GM12878 (cell line): ENCODE measurements at regions of chr2 and their contacts with region 1.

Region 1: GRCh38 chr2:156589381-156590079 is 153.4 kb downstream of the GPD2 start:
- DNase-seq: no peak
- ATAC-seq: peak; percentile 89
- H3K4me3 ChIP-seq: no peak overlapping the region
- H3K27ac ChIP-seq: no peak overlapping the region
- H3K4me1 ChIP-seq: no peaks in the 10 kb centered on the region; the same call in none of the 2 replicates
- H3K27me3 ChIP-seq: no peaks in the 10 kb centered on the region
- CTCF ChIP-seq: peak; percentile 36 to 79 (median 54); a peak in 5 of 6 replicates
- EP300 ChIP-seq: no peak
- POLR2A ChIP-seq: no peak
- RAD21 ChIP-seq: peak; percentile 94

Region 2: DNA sequence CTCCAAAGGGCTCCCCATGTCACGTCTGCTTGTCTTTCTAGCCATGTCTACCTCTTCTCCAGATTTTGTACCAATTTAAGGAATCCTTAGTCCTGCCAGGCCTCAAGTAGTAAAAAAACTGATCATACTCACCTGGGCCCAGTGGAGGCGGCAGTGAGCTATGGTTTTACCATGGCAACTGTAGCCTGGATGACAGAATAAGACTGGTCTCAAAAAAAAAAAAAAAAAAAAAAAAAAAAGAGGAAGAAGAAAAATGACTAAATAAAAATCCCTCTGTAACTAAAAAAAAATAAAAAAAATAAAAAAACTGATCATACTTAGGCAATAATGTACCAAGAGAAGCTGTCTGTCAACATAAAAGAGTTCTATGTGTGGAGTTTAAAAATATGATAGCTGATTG is 478.6 kb before region 1 on chr2:
- CTCF ChIA-PET with region 1: interaction called, 11 read pairs
- POLR2A ChIA-PET with region 1: no interaction called
- RAD21 ChIA-PET with region 1: interaction called, 4 read pairs
- SMC1A ChIA-PET with region 1: interaction called, 3 read pairs
- in situ Hi-C with region 1: no loop called
- intact Hi-C with region 1: loop called (anchors 5 kb)
- DNase-seq: no peak
- ATAC-seq: peak; percentile 94
- H3K4me3 ChIP-seq: no peak overlapping the region
- H3K27ac ChIP-seq: no peak overlapping the region
- H3K4me1 ChIP-seq: no peaks in the 10 kb centered on the region
- H3K27me3 ChIP-seq: no peaks in the 10 kb centered on the region
- CTCF ChIP-seq: peak; percentile 39 to 47 (median 46)
- EP300 ChIP-seq: no peak
- POLR2A ChIP-seq: no peak
- RAD21 ChIP-seq: peak; percentile 66

Region 3: DNA sequence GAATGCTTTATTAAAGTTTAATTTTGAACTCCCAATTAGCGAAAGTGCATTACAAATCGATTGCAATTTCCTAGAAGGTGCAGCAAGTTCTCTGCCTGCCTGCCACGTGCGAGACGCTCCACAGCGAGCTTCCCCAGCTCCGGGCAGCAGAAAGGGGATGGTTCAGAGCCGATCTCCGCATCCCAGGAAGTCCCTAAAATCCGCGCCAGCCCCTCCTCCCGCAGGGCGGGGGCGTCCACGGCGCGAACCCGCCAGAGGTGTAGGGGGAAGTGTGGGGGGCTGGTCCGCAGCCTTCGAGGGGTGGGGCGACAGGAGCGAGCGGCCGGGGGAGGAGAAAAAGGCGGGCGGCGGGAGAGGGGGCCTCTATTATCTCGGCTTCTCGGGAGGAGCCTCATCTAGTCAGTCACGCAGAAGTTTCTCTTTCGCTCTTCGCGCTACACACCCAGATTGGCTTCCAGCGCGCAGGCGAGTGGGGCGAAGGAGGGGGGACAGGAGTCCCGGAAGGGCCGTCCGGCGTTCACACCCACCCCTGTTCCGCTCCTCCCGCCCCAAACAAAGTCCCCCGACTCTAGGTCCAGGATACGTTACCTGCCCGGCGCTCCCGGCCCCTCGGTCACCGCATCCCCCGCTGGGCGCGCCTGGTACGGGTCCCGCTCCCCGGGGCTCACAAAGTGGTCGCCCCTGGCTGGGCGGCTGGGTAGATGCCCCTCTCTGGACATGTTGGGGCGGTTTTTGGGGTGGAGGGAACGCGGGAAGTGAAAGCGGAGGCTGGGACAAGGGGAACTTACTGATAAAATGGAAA is 247.9 kb before region 1 on chr2:
- CTCF ChIA-PET with region 1: interaction called, 14 read pairs
- POLR2A ChIA-PET with region 1: interaction called, 3 read pairs
- RAD21 ChIA-PET with region 1: interaction called, 205 read pairs
- SMC1A ChIA-PET with region 1: interaction called, 244 read pairs
- in situ Hi-C with region 1: loop called (anchors 25 kb)
- intact Hi-C with region 1: no loop called
- DNase-seq: peak; percentile 89
- ATAC-seq: peak; percentile 86
- H3K4me3 ChIP-seq: peak overlapping the region; percentile 93
- H3K27ac ChIP-seq: peak overlapping the region; percentile 100
- H3K4me1 ChIP-seq: peaks cover 15% of the 10 kb centered on the region
- H3K27me3 ChIP-seq: no peaks in the 10 kb centered on the region
- CTCF ChIP-seq: no peak
- EP300 ChIP-seq: no peak; a peak in 1 of 4 replicates
- POLR2A ChIP-seq: peak; percentile 90
- RAD21 ChIP-seq: no peak; the same call in 1 of the 2 replicates

Region 4: GRCh38 chr2:156430236-156430979 is 159.1 kb before region 1 on chr2:
- CTCF ChIA-PET with region 1: interaction called, 13 read pairs
- POLR2A ChIA-PET with region 1: no interaction called
- RAD21 ChIA-PET with region 1: interaction called, 13 read pairs
- SMC1A ChIA-PET with region 1: interaction called, 18 read pairs
- in situ Hi-C with region 1: no loop called
- intact Hi-C with region 1: no loop called
- DNase-seq: no peak
- ATAC-seq: peak; percentile 48
- H3K4me3 ChIP-seq: no peak overlapping the region; the same call in 1 of the 2 replicates
- H3K27ac ChIP-seq: peak overlapping the region; percentile 83
- H3K4me1 ChIP-seq: peaks cover 28% of the 10 kb centered on the region
- H3K27me3 ChIP-seq: no peaks in the 10 kb centered on the region
- CTCF ChIP-seq: no peak
- EP300 ChIP-seq: no peak
- POLR2A ChIP-seq: no peak
- RAD21 ChIP-seq: no peak

Region 5: DNA sequence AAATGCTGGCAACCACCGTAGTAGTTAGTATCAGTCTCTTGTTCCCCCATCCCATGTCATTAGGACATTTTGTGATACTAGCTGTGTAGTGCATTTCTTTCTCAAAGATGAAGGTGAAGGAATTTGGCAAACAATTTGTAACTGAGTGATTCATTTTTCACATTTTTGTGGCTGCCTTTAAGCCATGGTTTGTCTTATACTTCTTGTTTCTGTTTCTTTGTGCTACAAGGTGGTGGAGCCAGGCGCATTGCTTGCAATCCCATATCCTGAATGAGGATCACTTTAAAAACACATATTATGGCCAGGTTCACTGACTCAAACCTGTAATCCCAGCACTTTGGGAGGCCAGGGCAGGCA is 112.7 kb before region 1 on chr2:
- CTCF ChIA-PET with region 1: interaction called, 4 read pairs
- POLR2A ChIA-PET with region 1: no interaction called
- RAD21 ChIA-PET with region 1: interaction called, 3 read pairs
- SMC1A ChIA-PET with region 1: interaction called, 32 read pairs
- in situ Hi-C with region 1: no loop called
- intact Hi-C with region 1: no loop called
- DNase-seq: peak; percentile 77
- ATAC-seq: peak; percentile 86
- H3K4me3 ChIP-seq: no peak overlapping the region
- H3K27ac ChIP-seq: peak overlapping the region; percentile 66
- H3K4me1 ChIP-seq: peaks cover 39% of the 10 kb centered on the region; the same call in 1 of the 2 replicates
- H3K27me3 ChIP-seq: no peaks in the 10 kb centered on the region
- CTCF ChIP-seq: no peak
- EP300 ChIP-seq: peak; percentile 24 to 52; a peak in 1 of 4 replicates
- POLR2A ChIP-seq: no peak
- RAD21 ChIP-seq: no peak

Region 6: GRCh38 chr2:156538083-156538504 is 51.4 kb before region 1 on chr2:
- CTCF ChIA-PET with region 1: interaction called, 10 read pairs
- POLR2A ChIA-PET with region 1: no interaction called
- RAD21 ChIA-PET with region 1: interaction called, 10 read pairs
- SMC1A ChIA-PET with region 1: interaction called, 9 read pairs
- in situ Hi-C with region 1: no loop called
- intact Hi-C with region 1: no loop called
- DNase-seq: peak; percentile 53
- ATAC-seq: peak; percentile 87
- H3K4me3 ChIP-seq: no peak overlapping the region
- H3K27ac ChIP-seq: peak overlapping the region; percentile 69
- H3K4me1 ChIP-seq: peaks cover 49% of the 10 kb centered on the region
- H3K27me3 ChIP-seq: no peaks in the 10 kb centered on the region
- CTCF ChIP-seq: no peak
- EP300 ChIP-seq: no peak
- POLR2A ChIP-seq: peak; percentile 49; the same call in 1 of the 2 replicates
- RAD21 ChIP-seq: no peak

Region 7: DNA sequence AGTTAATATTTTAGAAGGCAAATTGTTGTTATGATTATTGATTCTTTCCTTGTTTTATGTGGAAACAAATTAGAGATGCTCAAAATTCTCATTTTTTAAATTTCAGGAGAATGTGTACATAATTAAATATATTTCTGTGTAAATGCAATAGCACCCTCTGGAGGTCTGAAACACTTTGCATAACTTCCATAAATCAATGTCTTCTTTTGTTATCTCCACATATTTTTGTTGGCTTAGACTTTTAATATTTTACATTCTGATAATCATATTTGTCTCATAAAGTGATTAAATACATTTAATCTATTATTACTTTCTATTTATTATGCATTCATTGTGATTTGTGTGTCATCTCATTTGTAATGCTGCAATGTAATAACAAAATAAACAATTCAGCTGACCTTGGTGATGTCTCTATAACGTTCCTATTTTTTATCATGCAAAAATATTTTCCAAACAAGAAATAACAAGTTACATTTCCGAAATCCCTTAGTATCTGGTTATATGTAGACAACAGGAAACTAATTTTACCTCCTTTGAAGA is 466.2 kb after region 1 on chr2:
- CTCF ChIA-PET with region 1: interaction called, 12 read pairs
- POLR2A ChIA-PET with region 1: no interaction called
- RAD21 ChIA-PET with region 1: interaction called, 3 read pairs
- SMC1A ChIA-PET with region 1: no interaction called
- in situ Hi-C with region 1: no loop called
- intact Hi-C with region 1: no loop called
- DNase-seq: no peak
- ATAC-seq: no peak
- H3K4me3 ChIP-seq: no peak overlapping the region
- H3K27ac ChIP-seq: no peak overlapping the region
- H3K4me1 ChIP-seq: no peaks in the 10 kb centered on the region
- H3K27me3 ChIP-seq: peaks cover 0 to 2% of the 10 kb centered on the region in 2 experiments; a peak in 1 of 4 replicates
- CTCF ChIP-seq: peak in 2 of 3 experiments; percentile 14 to 28; a peak in 3 of 6 replicates
- EP300 ChIP-seq: no peak
- POLR2A ChIP-seq: no peak
- RAD21 ChIP-seq: peak; percentile 42; the same call in 1 of the 2 replicates